Activated CD4-positive, alpha-beta T cell treated with anti-CD3 and anti-CD28 coated beads for 36 hours (primary cell): ENCODE measurements at regions of chr3 and their contacts with region 1.

Region 1: DNA sequence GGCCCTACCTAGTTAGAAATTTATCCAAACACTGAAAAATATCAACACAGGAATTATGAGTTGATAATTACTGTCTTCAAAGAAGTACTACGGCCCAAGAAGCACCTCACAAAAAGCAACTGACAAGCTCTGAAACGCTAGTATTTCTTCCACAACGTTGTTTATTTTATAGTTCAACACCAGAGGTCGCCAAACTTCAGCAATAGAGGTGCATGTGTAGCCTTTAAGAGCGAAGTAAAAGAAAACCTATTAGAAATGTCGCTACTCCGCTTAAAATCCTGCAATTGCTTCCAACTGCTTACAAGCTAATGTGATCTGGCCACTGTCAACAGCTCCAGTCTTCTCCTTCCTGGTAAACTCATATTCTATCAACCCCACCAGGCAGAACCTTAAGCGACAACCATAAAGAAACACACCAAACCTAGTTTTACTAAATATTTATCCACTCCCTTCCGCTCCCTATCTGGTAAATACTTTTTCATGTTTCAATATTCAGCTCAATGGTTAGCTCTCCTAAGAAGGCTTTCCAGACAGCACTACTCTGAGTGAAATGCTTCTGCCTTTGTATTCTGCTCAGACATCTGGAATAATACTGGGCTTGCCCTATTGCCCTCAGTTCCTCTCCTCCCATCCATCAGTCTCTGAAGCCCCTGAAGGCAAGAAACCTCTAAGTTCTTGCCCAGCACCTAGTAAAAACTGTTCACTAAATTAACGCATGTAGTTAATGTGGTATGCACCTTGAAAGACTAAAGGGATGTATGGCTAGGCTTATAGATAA is 110.2 kb downstream of the NR1I2 start:
- DNase-seq: peak; percentile 52
- ATAC-seq: peak; percentile 80
- H3K4me3 Mint-ChIP-seq: no peak overlapping the region
- H3K27ac Mint-ChIP-seq: no peak overlapping the region
- H3K4me1 Mint-ChIP-seq: peaks cover 19% of the 10 kb centered on the region
- H3K27me3 Mint-ChIP-seq: no peaks in the 10 kb centered on the region

Region 2: GRCh38 chr3:119618905-119619493 is 273.1 kb before region 1 on chr3:
- CTCF ChIA-PET with region 1: no interaction called
- POLR2A ChIA-PET with region 1: no interaction called
- intact Hi-C with region 1: no loop called
- DNase-seq: no peak
- ATAC-seq: peak; percentile 26
- H3K4me3 Mint-ChIP-seq: no peak overlapping the region
- H3K27ac Mint-ChIP-seq: no peak overlapping the region
- H3K4me1 Mint-ChIP-seq: no peaks in the 10 kb centered on the region
- H3K27me3 Mint-ChIP-seq: peaks cover 2% of the 10 kb centered on the region

Region 3: DNA sequence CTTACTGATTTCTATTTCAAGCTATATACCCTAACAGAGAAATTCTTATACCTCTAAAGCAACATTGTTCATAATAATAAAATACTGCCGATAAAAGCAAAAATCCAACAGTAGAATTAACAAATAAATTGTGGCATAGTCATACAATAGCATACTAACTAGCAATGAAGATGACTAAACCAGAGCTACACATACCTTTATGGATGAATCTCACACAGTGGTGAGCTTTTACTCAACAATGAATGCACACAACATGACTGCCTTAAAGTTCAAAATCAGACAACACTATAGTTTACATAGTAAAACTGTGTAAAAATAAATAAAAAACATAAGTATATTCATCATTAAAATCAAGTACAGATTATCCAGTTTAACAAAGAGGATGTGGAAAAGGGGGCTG is 11.2 kb before region 1 on chr3:
- CTCF ChIA-PET with region 1: interaction called, 11 read pairs
- POLR2A ChIA-PET with region 1: no interaction called
- intact Hi-C with region 1: no loop called
- DNase-seq: no peak
- ATAC-seq: no peak
- H3K4me3 Mint-ChIP-seq: no peak overlapping the region
- H3K27ac Mint-ChIP-seq: no peak overlapping the region
- H3K4me1 Mint-ChIP-seq: no peaks in the 10 kb centered on the region
- H3K27me3 Mint-ChIP-seq: no peaks in the 10 kb centered on the region

Region 4: DNA sequence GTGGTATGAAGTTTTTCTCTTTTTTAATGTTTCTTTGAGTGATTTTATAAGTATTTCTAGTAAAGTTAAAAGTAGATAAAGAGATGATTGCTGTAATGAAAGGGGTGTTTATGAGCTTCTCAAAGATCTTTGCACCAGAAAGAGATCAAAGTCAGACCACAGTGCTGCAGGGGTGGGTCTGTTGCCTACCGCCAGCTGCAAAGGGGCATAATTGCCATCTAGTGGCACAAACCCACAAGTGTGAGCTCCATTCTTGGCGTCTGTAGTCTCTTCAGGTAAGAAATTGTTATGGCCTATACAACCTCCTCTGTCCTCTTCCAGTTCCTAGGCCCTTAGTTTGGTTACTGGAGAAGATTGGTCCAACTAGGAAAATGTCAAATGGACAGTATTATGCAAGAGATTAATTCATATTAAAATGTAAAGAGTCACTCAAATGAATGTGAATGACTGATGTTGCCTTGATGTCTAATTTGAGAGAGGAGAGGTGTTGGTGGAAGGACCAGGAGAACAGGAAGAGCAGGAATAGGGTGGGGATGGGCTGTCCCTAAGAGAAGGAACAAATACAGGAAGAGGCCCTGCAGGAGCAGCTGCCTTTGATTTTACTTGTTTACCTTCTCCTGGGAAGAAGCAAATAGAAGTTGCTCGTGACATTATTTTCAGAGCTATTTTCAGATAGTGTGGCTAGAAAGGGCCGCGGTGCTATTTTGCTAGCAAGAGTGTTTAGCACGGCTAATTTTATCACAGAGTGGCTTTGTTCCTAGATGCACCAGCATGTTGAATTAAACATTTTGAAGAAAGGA is 255.1 kb after region 1 on chr3:
- CTCF ChIA-PET with region 1: interaction called, 35 read pairs
- POLR2A ChIA-PET with region 1: interaction called, 5 read pairs
- intact Hi-C with region 1: loop called (anchors 1 kb)
- DNase-seq: peak; percentile 65
- ATAC-seq: peak; percentile 57
- H3K4me3 Mint-ChIP-seq: no peak overlapping the region
- H3K27ac Mint-ChIP-seq: no peak overlapping the region
- H3K4me1 Mint-ChIP-seq: peaks cover 27% of the 10 kb centered on the region
- H3K27me3 Mint-ChIP-seq: no peaks in the 10 kb centered on the region

Region 5: GRCh38 chr3:120182724-120183524 is 290.8 kb after region 1 on chr3:
- CTCF ChIA-PET with region 1: interaction called, 10 read pairs
- POLR2A ChIA-PET with region 1: no interaction called
- intact Hi-C with region 1: loop called (anchors 1 kb)
- DNase-seq: peak; percentile 27
- ATAC-seq: peak; percentile 36
- H3K4me3 Mint-ChIP-seq: no peak overlapping the region
- H3K27ac Mint-ChIP-seq: no peak overlapping the region
- H3K4me1 Mint-ChIP-seq: no peaks in the 10 kb centered on the region
- H3K27me3 Mint-ChIP-seq: no peaks in the 10 kb centered on the region

Region 6: DNA sequence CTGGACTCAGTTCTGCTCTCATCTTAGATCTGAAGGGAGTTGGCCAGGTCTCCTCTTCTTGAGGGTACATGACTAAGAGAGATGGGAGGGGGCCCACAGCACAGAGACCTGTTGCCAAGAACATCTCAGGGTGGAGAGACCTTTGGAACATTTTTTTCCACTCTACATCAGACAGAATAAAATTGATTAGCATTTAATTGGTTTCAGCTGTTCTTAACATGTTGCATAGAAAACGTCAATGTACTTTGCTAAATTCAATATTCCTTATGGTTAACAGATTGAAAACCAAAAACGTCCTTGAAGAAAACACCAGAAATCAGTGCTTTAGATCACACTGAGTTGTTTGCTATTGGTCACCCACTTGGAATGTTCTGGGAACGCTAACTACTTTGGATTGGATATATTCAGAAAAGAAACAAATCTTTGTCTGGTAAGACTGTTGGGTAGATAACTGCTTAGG is 595.1 kb after region 1 on chr3:
- CTCF ChIA-PET with region 1: no interaction called
- POLR2A ChIA-PET with region 1: no interaction called
- intact Hi-C with region 1: no loop called
- DNase-seq: no peak
- ATAC-seq: no peak
- H3K4me3 Mint-ChIP-seq: no peak overlapping the region
- H3K27ac Mint-ChIP-seq: no peak overlapping the region
- H3K4me1 Mint-ChIP-seq: no peaks in the 10 kb centered on the region
- H3K27me3 Mint-ChIP-seq: peaks cover 22% of the 10 kb centered on the region

Region 7: GRCh38 chr3:120558771-120559241 is 666.7 kb after region 1 on chr3:
- CTCF ChIA-PET with region 1: no interaction called
- POLR2A ChIA-PET with region 1: no interaction called
- intact Hi-C with region 1: loop called in 1 of 2 experiments (anchors 5 kb)
- DNase-seq: peak; percentile 93
- ATAC-seq: peak; percentile 68
- H3K4me3 Mint-ChIP-seq: peak overlapping the region; percentile 56
- H3K27ac Mint-ChIP-seq: peak overlapping the region; percentile 10
- H3K4me1 Mint-ChIP-seq: peaks cover 12% of the 10 kb centered on the region
- H3K27me3 Mint-ChIP-seq: peaks cover 6% of the 10 kb centered on the region

Region 8: DNA sequence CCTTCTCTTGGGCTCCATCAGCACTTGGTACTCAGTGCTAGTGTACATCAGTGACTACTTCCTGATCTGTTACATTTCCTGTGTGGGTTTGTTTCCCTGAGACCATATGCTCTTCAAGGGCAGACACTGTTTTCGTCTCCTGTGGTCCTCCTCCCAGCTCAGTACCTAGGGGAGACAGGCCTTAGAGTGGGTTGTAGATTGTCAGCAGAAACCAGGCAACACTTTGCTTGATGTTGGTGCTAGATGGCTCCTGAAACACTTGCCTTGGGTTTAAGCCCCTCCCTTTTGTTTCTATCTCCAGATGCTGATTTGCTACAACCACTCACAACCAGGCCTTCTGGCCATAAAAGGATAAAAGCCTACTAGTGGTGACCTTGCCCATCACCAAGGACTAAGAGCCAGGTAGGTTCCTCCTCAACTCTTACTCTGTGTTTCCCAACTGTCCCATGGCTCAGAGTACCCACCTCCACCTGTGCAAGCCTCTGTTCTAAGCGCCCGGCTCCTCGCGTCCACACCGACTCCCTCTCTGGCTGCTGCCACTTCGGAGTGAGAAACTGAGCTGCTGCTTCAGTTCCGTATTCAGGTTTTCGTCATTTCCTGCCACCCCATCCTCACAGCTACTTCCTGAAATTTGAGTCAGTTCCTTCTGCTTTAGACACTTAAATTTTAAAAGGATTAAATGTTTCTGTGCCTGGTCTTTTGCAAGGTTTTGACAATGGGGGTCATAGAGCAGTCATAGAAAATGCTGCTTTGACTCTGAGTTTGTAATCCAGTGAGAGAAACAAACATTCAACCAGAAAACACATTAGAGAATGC is 1768.4 kb after region 1 on chr3 and contains the start of gene HCLS1:
- CTCF ChIA-PET with region 1: no interaction called
- POLR2A ChIA-PET with region 1: no interaction called
- intact Hi-C with region 1: no loop called
- DNase-seq: peak; percentile 83
- ATAC-seq: peak; percentile 88
- H3K4me3 Mint-ChIP-seq: peak within 1 kb of the TSS; percentile 95
- H3K27ac Mint-ChIP-seq: peak within 1 kb of the TSS; percentile 97
- H3K4me1 Mint-ChIP-seq: peaks cover 50% of the 10 kb centered on the region
- H3K27me3 Mint-ChIP-seq: no peaks in the 10 kb centered on the region
- total RNA-seq, gene HCLS1: 200 to 235 TPM